Activated B cell treated with CpG ODN at 0.5 μM for 24 hours (primary cell): ENCODE measurements at regions of chr11 and their contacts with region 1.

Region 1: DNA sequence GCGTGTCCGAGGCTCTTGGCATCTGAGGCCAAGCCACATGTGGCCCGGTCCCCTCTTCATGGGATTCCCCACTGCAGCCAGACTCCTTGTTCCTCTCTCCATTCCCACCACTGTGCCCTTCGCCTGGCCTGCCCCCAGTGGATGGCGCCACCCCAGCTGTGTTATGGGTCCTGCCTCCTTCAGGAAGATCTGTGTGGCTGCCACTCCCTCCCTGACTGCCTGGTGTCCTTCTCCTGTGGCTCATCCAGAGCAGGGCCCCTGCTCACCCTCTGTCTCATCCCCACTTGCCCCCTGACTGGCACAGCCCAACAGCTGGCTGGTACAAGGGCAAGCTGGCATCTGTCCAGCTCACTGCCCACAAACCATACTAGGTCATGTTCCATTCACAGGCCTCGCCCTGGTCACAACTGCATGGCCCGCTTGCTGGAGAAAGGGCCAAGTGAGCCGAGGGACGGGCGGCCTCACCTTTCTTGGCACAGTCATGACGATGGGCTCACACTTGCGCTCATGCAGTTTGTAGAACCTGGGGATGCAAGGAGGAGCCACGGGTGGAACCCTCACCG is 1.9 kb upstream of the PTPRCAP start:
- DNase-seq: peak; percentile 26
- ATAC-seq: no peak
- H3K4me3 Mint-ChIP-seq: peak overlapping the region; percentile 96
- H3K27ac Mint-ChIP-seq: peak overlapping the region; percentile 88
- H3K4me1 Mint-ChIP-seq: peaks cover 76% of the 10 kb centered on the region
- H3K27me3 Mint-ChIP-seq: no peaks in the 10 kb centered on the region
- CTCF ChIP-seq: no peak

Region 2: DNA sequence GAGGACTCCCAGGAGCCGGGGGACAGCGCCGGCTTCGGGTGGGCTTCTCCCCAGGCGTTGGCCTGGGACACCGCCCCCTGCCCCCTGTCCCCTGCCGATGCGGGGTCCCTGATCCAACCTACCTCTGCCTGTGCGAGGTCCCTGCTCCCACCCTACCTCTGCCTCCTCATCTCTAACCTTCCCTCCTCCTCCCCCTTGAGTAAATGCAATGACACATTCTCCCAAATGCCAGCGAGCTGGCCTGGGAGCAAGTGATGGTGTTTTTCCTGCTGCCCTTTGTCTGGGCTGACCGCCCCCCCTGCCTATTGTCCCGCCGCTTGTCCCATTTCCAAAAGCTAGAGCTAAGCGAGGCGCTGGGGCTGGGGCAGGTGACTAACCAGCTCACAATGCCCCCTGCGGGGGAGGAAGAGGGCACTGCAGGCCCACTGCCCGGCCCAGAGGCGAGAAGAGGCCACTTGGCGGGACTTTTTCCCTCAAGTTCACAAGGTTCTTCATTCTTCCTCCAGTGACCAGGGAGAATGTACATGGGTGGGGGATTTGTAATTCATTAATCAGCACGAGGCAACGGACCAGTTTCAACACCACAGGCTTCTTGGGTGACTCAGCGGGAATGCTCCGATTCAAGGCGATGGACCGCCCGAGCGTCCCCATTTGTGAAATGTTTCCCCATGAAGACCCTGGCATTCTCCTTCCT is 65.3 kb before region 1 on chr11:
- CTCF ChIA-PET with region 1: interaction called, 3 read pairs
- POLR2A ChIA-PET with region 1: interaction called, 14 read pairs
- intact Hi-C with region 1: no loop called
- DNase-seq: peak; percentile 63
- ATAC-seq: peak; percentile 47
- H3K4me3 Mint-ChIP-seq: peak overlapping the region; percentile 87
- H3K27ac Mint-ChIP-seq: peak overlapping the region; percentile 79
- H3K4me1 Mint-ChIP-seq: peaks cover 57% of the 10 kb centered on the region
- H3K27me3 Mint-ChIP-seq: no peaks in the 10 kb centered on the region
- CTCF ChIP-seq: no peak

Region 3: DNA sequence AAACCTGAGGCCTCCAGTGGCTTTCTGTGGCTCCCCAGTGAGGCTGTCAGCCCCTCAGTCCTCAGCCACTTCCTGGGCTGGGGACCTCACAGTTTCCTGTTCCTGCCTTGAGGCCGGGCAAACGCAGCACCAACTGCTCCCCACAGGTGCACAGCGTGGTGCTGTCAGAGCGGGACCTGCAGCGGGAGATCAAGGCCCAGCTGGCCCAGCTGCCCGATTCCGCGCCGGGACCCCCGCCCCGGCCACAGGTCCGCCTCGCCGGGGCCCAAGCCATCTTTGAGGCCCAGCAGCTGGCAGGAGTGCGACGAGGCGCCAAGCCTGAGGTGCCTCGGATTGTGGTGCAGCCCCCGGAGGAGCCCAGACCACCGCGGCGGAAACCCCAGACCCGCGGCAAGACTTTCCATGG is 30.1 kb before region 1 on chr11:
- CTCF ChIA-PET with region 1: interaction called, 5 read pairs
- POLR2A ChIA-PET with region 1: interaction called, 693 read pairs
- intact Hi-C with region 1: no loop called
- DNase-seq: peak; percentile 61
- ATAC-seq: peak; percentile 63
- H3K4me3 Mint-ChIP-seq: peak overlapping the region; percentile 80
- H3K27ac Mint-ChIP-seq: peak overlapping the region; percentile 95
- H3K4me1 Mint-ChIP-seq: peaks cover 93% of the 10 kb centered on the region
- H3K27me3 Mint-ChIP-seq: no peaks in the 10 kb centered on the region
- CTCF ChIP-seq: no peak

Region 4: DNA sequence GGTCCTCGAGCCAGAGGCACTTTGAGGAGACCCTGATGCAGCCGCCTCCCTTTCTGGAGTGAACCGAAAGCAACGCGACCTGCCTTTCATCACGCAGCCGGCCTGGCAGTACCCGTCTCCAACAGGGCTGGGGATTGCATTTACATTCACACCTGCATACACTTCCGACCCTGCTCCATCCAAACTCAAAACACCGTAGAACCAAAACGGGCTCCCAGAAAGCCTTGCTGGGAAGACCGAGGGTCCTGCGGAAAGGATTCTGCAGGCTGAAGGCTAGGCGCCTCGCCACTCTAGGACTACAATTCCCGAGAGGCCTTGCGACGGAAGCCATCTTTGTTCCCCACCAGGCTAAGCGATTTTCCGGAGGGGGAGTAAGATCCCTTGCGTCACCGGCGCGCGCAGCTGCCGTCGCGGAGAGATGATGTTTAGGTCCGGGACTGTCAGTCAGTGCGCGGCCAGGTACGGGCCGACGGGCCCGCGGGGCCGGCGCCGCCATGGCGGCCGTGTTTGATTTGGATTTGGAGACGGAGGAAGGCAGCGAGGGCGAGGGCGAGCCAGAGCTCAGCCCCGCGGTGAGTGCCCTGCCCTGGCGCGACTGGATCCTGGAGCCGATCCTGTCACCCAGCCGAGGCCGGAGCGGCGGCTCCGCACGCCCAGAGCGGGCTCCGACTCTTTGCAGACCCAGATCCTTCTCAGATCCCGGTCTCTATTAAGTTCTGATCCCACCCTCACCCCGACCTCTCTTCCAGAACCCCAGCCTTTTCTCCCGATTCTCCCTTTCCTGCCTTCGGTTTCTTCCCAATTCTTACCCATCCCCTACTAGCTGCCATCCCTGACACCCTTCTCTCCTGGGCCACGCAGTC is 11.1 kb before region 1 on chr11 and contains the start of gene RPS6KB2:
- CTCF ChIA-PET with region 1: interaction called, 3 read pairs
- POLR2A ChIA-PET with region 1: interaction called, 1,417 read pairs
- intact Hi-C with region 1: loop called (anchors 1 kb)
- DNase-seq: peak; percentile 99
- ATAC-seq: peak; percentile 81
- H3K4me3 Mint-ChIP-seq: peak within 1 kb of the TSS; percentile 98
- H3K27ac Mint-ChIP-seq: peak within 1 kb of the TSS; percentile 93
- H3K4me1 Mint-ChIP-seq: peaks cover 41% of the 10 kb centered on the region
- H3K27me3 Mint-ChIP-seq: no peaks in the 10 kb centered on the region
- CTCF ChIP-seq: no peak
- total RNA-seq, gene RPS6KB2: 66.9 and 74.5 TPM in 2 replicates

Region 5: GRCh38 chr11:67482825-67483798 is 43.7 kb after region 1 on chr11 and contains the start of gene AIP:
- CTCF ChIA-PET with region 1: interaction called, 4 read pairs
- POLR2A ChIA-PET with region 1: interaction called, 189 read pairs
- intact Hi-C with region 1: loop called (anchors 1 kb)
- DNase-seq: peak; percentile 87
- ATAC-seq: peak; percentile 85
- H3K4me3 Mint-ChIP-seq: peak within 1 kb of the TSS; percentile 93
- H3K27ac Mint-ChIP-seq: peak within 1 kb of the TSS; percentile 98
- H3K4me1 Mint-ChIP-seq: peaks cover 58% of the 10 kb centered on the region
- H3K27me3 Mint-ChIP-seq: no peaks in the 10 kb centered on the region
- CTCF ChIP-seq: no peak
- total RNA-seq, gene AIP: 108 and 114 TPM in 2 replicates